ENCODE measurements at regions of chr1 and their contacts with region 1.

Region 1: GRCh38 chr1:32716312-32717148 is 14.0 kb upstream of the SYNC start:
- DNase-seq: peak; percentile 94
- H3K4me3 ChIP-seq: no peak overlapping the region
- H3K27ac ChIP-seq: peak overlapping the region; percentile 11
- H3K4me1 ChIP-seq: peaks cover 20% of the 10 kb centered on the region
- H3K27me3 ChIP-seq: no peaks in the 10 kb centered on the region
- CTCF ChIP-seq: no peak

Region 2: GRCh38 chr1:32400876-32401631 is 315.5 kb before region 1 on chr1:
- CTCF ChIA-PET with region 1: no interaction called
- dilution Hi-C with region 1: no loop called
- in situ Hi-C with region 1: no loop called
- intact Hi-C with region 1: loop called (anchors 2 kb)
- DNase-seq: peak; percentile 63
- H3K4me3 ChIP-seq: no peak overlapping the region
- H3K27ac ChIP-seq: no peak overlapping the region
- H3K4me1 ChIP-seq: no peaks in the 10 kb centered on the region
- H3K27me3 ChIP-seq: no peaks in the 10 kb centered on the region
- CTCF ChIP-seq: peak; percentile 94 to 95

Region 3: DNA sequence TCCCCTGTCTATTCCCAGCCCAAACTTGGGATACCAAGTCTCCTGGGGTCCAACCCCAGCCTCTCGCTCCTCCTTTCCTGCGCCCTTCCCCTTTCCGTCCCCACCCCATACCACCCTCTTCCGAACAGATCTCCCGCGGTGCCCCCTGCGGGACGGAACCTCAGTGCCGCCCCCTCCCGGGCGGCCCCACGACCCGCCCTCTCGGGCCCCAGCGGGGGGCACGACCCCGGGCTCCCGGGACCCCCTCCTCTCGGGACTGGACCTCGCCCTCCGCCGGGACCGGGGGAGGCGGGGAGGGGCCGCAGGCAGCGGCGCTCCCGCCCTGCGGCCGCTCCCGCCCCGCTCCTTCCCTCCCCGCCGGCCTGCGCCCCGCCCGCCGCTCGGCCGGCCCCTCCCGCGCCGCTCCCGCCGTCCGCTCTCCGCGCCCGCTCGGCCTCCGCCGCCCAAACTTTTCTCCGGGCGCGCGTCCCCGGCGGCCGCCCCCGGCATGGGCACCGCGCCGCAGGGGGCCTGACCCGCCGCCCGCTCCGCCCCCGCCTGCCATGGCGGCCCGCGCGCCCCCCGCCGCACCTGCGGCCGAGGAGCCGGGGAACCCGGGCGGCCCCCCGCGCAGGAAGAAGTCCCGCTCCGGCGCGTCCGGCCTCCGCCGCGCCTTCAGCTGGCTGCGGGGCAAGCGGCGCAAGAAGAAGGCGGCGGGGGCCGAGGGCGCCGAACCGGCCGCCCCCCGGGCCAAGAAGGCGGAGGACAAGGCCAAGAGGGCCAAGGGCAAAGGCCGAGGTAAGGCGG is 25.1 kb after region 1 on chr1:
- CTCF ChIA-PET with region 1: interaction called, 3 read pairs
- dilution Hi-C with region 1: no loop called
- in situ Hi-C with region 1: no loop called
- intact Hi-C with region 1: loop called (anchors 1 kb)
- DNase-seq: no peak
- H3K4me3 ChIP-seq: peak overlapping the region; percentile 88 to 92 (median 91)
- H3K27ac ChIP-seq: peak overlapping the region; percentile 62
- H3K4me1 ChIP-seq: peaks cover 22% of the 10 kb centered on the region
- H3K27me3 ChIP-seq: no peaks in the 10 kb centered on the region
- CTCF ChIP-seq: peak in 1 of 2 donors; percentile 51

Region 4: DNA sequence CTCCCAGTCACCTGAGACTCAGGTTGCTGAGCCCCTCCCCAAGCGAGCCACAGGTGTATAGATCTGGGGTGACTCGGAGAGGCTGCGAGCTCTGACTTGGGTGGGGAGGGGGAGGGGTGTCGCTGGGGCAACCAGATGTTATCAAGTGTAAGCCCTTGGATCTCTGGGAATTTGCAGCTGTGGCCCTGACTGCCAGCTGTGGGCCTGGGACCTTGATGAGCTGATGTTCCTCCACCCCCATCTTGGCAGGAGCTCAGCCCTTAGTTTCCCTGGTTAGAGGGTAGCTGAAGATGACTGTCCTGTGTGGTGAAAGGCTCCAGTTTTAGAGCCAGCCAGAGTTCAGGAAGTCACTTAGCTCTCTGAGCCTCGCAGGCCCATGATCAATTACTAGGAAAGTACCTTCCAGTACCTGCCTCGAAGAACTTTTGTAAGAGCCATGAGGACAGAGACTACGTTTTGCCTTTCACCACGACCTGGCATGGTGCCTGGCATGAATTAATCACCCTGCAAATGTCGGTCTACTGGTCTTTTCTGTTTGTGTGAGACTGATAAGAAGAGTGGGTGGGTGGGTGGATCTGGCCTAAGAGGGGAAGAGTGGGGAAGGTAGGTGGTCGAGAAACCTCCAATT is 44.8 kb after region 1 on chr1:
- CTCF ChIA-PET with region 1: no interaction called
- dilution Hi-C with region 1: loop called (anchors 5 kb)
- in situ Hi-C with region 1: loop called (anchors 5 kb)
- intact Hi-C with region 1: loop called (anchors 2 kb)
- DNase-seq: peak; percentile 98
- H3K4me3 ChIP-seq: peak overlapping the region in 2 of 3 experiments; percentile 5 to 28
- H3K27ac ChIP-seq: peak overlapping the region; percentile 98
- H3K4me1 ChIP-seq: peaks cover 71% of the 10 kb centered on the region
- H3K27me3 ChIP-seq: no peaks in the 10 kb centered on the region
- CTCF ChIP-seq: no peak

Region 5: DNA sequence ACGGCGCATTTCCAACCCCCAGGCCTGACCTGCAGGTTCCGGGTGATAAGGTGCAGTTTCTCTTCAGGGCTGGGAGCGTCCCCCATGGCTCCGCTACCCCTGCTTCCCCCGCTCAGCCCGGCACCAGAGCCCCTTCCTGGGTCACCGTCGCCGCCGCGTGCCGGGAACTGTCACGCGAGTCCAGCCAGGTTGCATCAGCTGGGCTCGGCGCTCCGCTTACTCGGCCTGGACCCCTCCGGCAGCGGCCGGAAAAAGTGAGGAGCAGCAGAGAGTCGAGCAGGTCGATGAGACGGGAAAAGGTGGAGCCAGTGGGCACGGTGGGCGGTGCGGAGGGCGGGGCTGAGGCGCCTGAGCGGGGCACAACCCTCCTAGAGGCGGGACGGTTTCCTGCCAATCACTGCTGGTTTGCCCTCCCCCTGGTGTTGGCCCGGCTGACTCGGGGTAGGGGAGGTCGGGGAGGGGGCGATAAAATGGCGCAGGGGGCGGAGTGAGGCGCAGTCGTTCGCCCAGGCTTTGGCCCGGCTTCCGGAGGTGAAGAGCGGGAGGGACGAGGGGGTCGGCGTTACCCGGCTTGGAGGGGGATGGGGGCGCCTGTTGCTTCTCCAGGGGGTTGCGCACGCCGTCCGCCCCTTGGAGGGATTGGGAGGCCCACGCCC is 100.8 kb after region 1 on chr1 and contains the starts of genes S100PBP and YARS1:
- CTCF ChIA-PET with region 1: no interaction called
- dilution Hi-C with region 1: no loop called
- in situ Hi-C with region 1: no loop called
- intact Hi-C with region 1: loop called (anchors 5 kb)
- DNase-seq: peak; percentile 98
- H3K4me3 ChIP-seq: peak within 1 kb of the TSS; percentile 91 to 96 (median 91)
- H3K27ac ChIP-seq: peak within 1 kb of the TSS; percentile 98
- H3K4me1 ChIP-seq: peaks cover 23% of the 10 kb centered on the region
- H3K27me3 ChIP-seq: no peaks in the 10 kb centered on the region
- CTCF ChIP-seq: no peak
- total RNA-seq, gene S100PBP: 31.2 to 41.7 TPM
- total RNA-seq, gene YARS1: 165 to 219 TPM

Region 6: GRCh38 chr1:33080885-33081553 is 364.5 kb after region 1 on chr1 and contains the start of gene AZIN2:
- CTCF ChIA-PET with region 1: no interaction called
- dilution Hi-C with region 1: loop called (anchors 10 kb)
- in situ Hi-C with region 1: no loop called
- intact Hi-C with region 1: no loop called
- DNase-seq: peak; percentile 93
- H3K4me3 ChIP-seq: peak within 1 kb of the TSS; percentile 74 to 88 (median 77)
- H3K27ac ChIP-seq: peak within 1 kb of the TSS; percentile 42
- H3K4me1 ChIP-seq: peaks cover 18% of the 10 kb centered on the region
- H3K27me3 ChIP-seq: no peaks in the 10 kb centered on the region
- CTCF ChIP-seq: no peak
- total RNA-seq, gene AZIN2: 8.3 to 12.5 TPM